CD8-positive, alpha-beta T cell (primary cell): ENCODE measurements at regions of chr20 and their contacts with region 1.

Region 1: DNA sequence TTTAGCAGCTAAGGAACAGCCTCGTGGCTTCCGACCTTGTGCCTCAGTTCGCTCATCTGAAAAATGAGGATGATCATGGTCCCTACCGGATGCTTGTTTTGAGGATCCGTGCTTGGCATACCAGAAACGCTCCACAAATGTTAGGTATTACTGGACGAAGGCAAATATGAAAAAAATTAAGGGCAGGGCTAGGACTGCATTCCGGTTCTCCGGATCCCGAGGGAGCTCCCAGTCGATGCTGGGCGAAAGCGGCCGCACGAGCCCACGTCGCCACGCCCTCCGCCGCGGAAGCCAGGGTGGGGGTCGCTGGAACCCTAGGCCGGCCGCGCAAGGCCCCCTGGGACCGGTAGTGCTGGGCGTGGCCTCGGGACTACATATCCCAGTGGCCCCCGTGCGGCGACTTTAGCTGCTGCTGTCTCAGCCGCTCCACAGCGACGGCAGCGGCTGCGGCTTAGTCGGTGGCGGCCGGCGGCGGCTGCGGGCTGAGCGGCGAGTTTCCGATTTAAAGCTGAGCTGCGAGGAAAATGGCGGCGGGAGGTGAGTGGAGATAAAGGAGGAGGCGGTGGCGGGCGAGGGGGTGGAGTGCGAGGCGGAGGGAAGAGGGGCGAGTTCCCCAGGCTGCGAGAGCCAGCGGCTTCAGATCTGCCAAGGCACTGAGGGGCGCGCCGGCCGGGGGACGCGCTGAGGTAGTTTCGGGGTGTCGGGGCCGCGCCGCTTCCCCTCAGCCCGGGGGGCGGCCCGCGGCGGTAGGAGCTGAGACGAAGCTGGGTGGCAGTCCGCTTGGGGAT is at the start of gene NCOA3:
- DNase-seq: peak; percentile 73 to 92 (median 90)
- ATAC-seq: peak; percentile 80
- H3K4me3 ChIP-seq: peak within 1 kb of the TSS; percentile 60 to 91
- H3K4me3 Mint-ChIP-seq: peak within 1 kb of the TSS; percentile 97
- H3K27ac ChIP-seq: peak within 1 kb of the TSS; percentile 49 to 71
- H3K27ac Mint-ChIP-seq: peak within 1 kb of the TSS; percentile 98
- H3K4me1 ChIP-seq: peaks cover 24% of the 10 kb centered on the region
- H3K4me1 Mint-ChIP-seq: peaks cover 37% of the 10 kb centered on the region
- H3K27me3 ChIP-seq: no peaks in the 10 kb centered on the region
- H3K27me3 Mint-ChIP-seq: no peaks in the 10 kb centered on the region
- CTCF ChIP-seq: peak; percentile 34
- total RNA-seq, gene NCOA3: 45.1 to 47.1 TPM

Region 2: DNA sequence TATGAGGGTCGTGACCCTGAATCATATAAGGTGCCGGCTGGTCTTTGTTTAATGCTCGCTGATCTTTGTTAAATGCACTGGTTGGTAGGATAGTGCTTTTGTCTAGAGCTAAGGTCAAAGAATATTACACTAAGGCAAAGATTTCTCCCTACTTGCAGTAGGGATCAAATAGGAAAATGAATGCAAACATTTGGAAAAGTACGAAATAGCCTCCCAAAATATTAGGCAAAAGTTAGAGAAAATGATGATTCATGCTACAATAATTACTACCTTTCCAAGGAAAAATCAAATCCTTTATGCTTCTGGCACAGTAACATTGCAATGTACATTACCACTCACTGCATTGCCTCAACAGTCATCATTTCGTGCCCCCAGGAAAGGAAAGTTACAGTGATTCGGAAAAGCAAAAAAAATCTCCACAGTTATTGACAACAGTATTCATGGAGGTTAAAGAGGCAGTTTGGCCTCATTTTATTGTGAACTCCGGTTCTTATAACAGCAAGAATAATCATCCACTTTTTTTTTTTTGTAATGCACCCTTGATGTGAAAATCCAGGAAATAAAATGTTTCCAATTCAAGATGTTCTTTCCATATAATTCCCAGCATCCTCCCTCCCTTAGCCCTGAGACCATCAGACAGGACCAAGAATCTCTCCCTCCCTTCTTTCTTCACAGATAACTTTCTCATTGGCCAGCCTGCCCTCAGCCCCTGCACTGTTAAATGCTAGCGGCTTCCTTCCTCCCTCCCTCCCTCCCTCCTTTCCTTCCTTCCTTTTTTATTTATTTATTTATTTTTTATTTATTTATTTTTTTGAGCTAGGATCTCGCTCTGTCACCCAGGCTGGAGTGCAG is 83.4 kb before region 1 on chr20:
- CTCF ChIA-PET with region 1: interaction called, 3 read pairs
- POLR2A ChIA-PET with region 1: no interaction called
- intact Hi-C with region 1: loop called in 1 of 2 experiments (anchors 5 kb)
- DNase-seq: no peak
- ATAC-seq: no peak
- H3K4me3 ChIP-seq: no peak overlapping the region
- H3K4me3 Mint-ChIP-seq: no peak overlapping the region
- H3K27ac ChIP-seq: no peak overlapping the region
- H3K27ac Mint-ChIP-seq: peak overlapping the region; percentile 52
- H3K4me1 ChIP-seq: peaks cover 26% of the 10 kb centered on the region
- H3K4me1 Mint-ChIP-seq: peaks cover 28% of the 10 kb centered on the region
- H3K27me3 ChIP-seq: no peaks in the 10 kb centered on the region
- H3K27me3 Mint-ChIP-seq: no peaks in the 10 kb centered on the region
- CTCF ChIP-seq: no peak

Region 3: GRCh38 chr20:47475419-47476044 is 26.1 kb before region 1 on chr20:
- CTCF ChIA-PET with region 1: no interaction called
- POLR2A ChIA-PET with region 1: no interaction called
- intact Hi-C with region 1: no loop called
- DNase-seq: no peak
- ATAC-seq: no peak
- H3K4me3 ChIP-seq: no peak overlapping the region
- H3K4me3 Mint-ChIP-seq: no peak overlapping the region
- H3K27ac ChIP-seq: no peak overlapping the region
- H3K27ac Mint-ChIP-seq: no peak overlapping the region
- H3K4me1 ChIP-seq: no peaks in the 10 kb centered on the region
- H3K4me1 Mint-ChIP-seq: no peaks in the 10 kb centered on the region
- H3K27me3 ChIP-seq: no peaks in the 10 kb centered on the region
- H3K27me3 Mint-ChIP-seq: no peaks in the 10 kb centered on the region
- CTCF ChIP-seq: no peak

Region 4: DNA sequence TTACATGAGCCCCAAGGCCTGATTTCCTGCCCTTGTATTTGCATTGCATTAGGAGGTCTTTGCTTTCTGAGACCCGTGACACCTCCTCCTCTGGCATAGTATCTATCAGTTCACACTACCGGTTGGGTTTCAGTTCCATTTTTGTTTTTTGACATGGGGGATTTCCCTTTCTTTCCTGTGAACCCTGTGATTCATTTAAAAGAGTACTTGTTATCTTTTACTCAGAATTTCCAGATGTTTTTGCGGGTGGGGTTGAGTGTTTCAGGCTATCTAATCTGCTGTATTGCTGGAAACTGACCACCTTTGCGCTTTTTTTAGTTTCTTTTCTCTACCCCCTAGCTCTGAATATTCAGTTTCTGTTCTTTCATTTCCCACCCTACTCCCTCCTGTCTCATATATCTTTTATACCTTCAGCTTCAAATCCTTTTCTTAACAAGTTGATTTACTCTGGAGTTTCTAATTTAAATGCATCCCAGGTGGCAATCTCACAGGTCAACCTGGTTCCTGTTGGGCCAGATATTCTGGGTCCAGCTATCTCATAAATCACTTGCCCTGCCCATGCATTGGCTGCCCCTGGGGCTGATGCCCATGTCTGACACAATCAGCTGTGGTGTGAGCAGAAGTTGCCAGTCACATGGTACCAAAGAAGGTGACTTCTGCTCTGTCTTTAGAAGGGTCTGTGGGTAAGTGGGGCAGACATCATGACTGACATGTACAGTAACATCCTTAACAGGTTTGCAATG is 14.3 kb before region 1 on chr20:
- CTCF ChIA-PET with region 1: interaction called, 11 read pairs
- POLR2A ChIA-PET with region 1: interaction called, 30 read pairs
- intact Hi-C with region 1: loop called (anchors 1 kb)
- DNase-seq: peak in 7 of 9 experiments; percentile 22 to 91 (median 53)
- ATAC-seq: peak; percentile 85
- H3K4me3 ChIP-seq: peak overlapping the region; percentile 6 to 13
- H3K4me3 Mint-ChIP-seq: peak overlapping the region; percentile 51
- H3K27ac ChIP-seq: peak overlapping the region; percentile 19 to 78
- H3K27ac Mint-ChIP-seq: peak overlapping the region; percentile 84
- H3K4me1 ChIP-seq: peaks cover 23% of the 10 kb centered on the region
- H3K4me1 Mint-ChIP-seq: peaks cover 30% of the 10 kb centered on the region
- H3K27me3 ChIP-seq: no peaks in the 10 kb centered on the region
- H3K27me3 Mint-ChIP-seq: no peaks in the 10 kb centered on the region
- CTCF ChIP-seq: no peak

Region 5: GRCh38 chr20:47535088-47535487 is 33.4 kb after region 1 on chr20:
- CTCF ChIA-PET with region 1: interaction called, 3 read pairs
- POLR2A ChIA-PET with region 1: interaction called, 3 read pairs
- intact Hi-C with region 1: loop called in 1 of 2 experiments (anchors 5 kb)
- DNase-seq: no peak
- ATAC-seq: no peak
- H3K4me3 ChIP-seq: no peak overlapping the region
- H3K4me3 Mint-ChIP-seq: no peak overlapping the region
- H3K27ac ChIP-seq: no peak overlapping the region
- H3K27ac Mint-ChIP-seq: no peak overlapping the region
- H3K4me1 ChIP-seq: peaks cover 25% of the 10 kb centered on the region
- H3K4me1 Mint-ChIP-seq: peaks cover 59% of the 10 kb centered on the region
- H3K27me3 ChIP-seq: no peaks in the 10 kb centered on the region
- H3K27me3 Mint-ChIP-seq: no peaks in the 10 kb centered on the region
- CTCF ChIP-seq: no peak

Region 6: DNA sequence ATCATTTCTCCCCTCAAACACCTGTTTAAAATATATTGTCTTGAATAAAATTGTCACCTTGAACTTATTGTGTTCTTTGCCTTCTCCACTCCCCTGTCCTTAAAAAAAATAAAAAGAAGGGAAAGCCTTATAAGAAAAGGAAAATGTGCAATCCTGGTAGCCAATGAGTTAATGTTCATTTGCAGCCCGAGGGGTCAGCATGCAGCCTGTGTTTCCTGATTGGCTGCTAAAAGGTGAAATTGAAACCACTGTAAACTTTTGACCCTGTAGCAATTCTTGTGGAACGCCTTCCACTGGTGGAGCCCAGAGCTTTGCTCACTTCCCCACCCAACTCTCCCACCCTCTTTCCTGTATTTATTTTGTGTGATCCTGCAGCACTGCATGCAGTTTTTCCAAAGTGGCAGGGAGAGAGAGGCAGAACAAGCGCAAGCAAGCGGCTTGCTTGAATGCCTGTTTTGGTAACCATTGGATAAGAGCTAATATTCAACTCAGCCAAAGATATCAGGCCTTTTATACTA is 74.9 kb after region 1 on chr20:
- CTCF ChIA-PET with region 1: no interaction called
- POLR2A ChIA-PET with region 1: no interaction called
- intact Hi-C with region 1: loop called in 1 of 2 experiments (anchors 10 kb)
- DNase-seq: peak in 3 of 9 experiments; percentile 2 to 16 (median 13)
- ATAC-seq: no peak
- H3K4me3 ChIP-seq: no peak overlapping the region
- H3K4me3 Mint-ChIP-seq: peak overlapping the region; percentile 35
- H3K27ac ChIP-seq: no peak overlapping the region
- H3K27ac Mint-ChIP-seq: peak overlapping the region; percentile 76
- H3K4me1 ChIP-seq: peaks cover 39% of the 10 kb centered on the region
- H3K4me1 Mint-ChIP-seq: peaks cover 80% of the 10 kb centered on the region
- H3K27me3 ChIP-seq: no peaks in the 10 kb centered on the region
- H3K27me3 Mint-ChIP-seq: no peaks in the 10 kb centered on the region
- CTCF ChIP-seq: no peak

Region 7: GRCh38 chr20:47620808-47621805 is 119.4 kb after region 1 on chr20:
- CTCF ChIA-PET with region 1: interaction called, 5 read pairs
- POLR2A ChIA-PET with region 1: no interaction called
- intact Hi-C with region 1: loop called in 1 of 2 experiments (anchors 5 kb)
- DNase-seq: peak in 2 of 9 experiments; percentile 61 to 70
- ATAC-seq: no peak
- H3K4me3 ChIP-seq: no peak overlapping the region
- H3K4me3 Mint-ChIP-seq: no peak overlapping the region
- H3K27ac ChIP-seq: no peak overlapping the region
- H3K27ac Mint-ChIP-seq: no peak overlapping the region
- H3K4me1 ChIP-seq: no peaks in the 10 kb centered on the region
- H3K4me1 Mint-ChIP-seq: peaks cover 21% of the 10 kb centered on the region
- H3K27me3 ChIP-seq: no peaks in the 10 kb centered on the region
- H3K27me3 Mint-ChIP-seq: no peaks in the 10 kb centered on the region
- CTCF ChIP-seq: peak; percentile 97

Region 8: DNA sequence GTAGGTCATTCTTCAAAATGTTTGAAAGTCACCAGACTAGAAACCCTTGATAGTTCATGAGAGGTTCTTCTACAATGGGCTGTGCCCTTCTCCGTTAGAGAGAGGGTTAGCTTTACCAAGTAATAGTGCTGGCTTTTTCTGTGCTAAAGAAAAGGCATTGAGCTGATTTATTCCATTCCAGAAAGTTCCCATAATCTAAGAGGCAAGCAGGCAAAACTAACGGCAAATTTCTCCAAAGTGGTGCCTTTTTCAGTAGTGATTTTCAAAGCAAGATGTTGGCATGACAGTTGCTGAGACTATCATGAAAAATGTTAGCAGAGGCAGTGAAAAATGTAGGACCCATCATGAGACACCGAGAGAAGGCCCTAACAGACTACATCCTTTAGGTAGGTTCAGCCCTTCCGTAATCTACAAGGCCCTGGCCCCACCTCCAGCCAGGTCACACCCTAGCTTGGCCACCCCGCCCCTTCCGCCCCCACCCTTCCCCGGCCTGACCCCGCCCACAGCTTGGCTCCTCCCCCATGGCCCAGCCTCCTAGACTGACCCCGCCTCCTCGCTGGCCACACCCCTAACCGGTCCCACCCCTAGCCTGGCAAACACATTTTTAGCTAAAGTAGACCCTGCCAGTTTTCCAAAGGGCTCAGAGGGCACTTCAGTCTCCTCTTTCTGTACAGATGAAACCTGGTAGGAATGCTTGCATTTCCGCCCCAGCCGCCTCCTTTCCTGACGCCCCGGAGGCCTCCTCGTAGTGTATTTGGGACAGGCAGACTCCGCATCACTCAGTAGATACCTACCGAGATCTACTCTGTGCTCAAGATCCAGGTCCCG is 882.4 kb after region 1 on chr20:
- CTCF ChIA-PET with region 1: no interaction called
- POLR2A ChIA-PET with region 1: no interaction called
- intact Hi-C with region 1: no loop called
- DNase-seq: peak in 2 of 9 experiments; percentile 13 to 14
- ATAC-seq: no peak
- H3K4me3 ChIP-seq: no peak overlapping the region
- H3K4me3 Mint-ChIP-seq: no peak overlapping the region
- H3K27ac ChIP-seq: no peak overlapping the region
- H3K27ac Mint-ChIP-seq: no peak overlapping the region
- H3K4me1 ChIP-seq: no peaks in the 10 kb centered on the region
- H3K4me1 Mint-ChIP-seq: no peaks in the 10 kb centered on the region
- H3K27me3 ChIP-seq: no peaks in the 10 kb centered on the region
- H3K27me3 Mint-ChIP-seq: peaks cover 15% of the 10 kb centered on the region
- CTCF ChIP-seq: no peak